ENCODE measurements at regions of chr2 and their contacts with region 1.

Region 1: DNA sequence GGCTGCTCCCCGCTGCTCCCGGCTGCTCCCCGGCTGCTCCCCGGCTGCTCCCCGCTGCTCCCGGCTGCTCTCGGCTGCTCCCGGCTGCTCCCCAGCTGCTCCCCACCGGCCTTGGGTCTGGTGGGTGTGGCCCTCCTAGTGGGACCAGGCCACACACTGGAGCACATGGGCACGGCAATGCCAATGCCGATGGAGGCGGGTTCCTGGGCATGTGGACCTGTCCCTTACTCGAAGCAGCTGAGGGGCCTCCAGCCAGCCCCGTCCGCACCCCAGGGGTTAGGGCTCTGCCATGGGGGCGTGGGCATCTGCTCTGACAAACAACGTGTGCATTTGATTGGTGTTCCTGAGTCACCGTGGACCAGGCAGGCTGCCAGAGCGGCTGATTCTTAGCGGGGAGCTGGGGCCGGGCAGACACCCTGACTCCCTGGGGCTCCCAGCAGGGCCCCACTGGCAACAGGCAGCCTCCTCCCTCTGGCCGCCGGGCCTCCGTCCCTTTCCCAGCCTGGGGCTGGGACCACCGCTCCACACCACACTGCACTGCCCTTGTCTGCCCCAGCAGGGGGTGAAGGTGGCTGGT is 1.9 kb upstream of the GAL3ST2 start:
- DNase-seq: no peak
- H3K4me3 ChIP-seq: no peak overlapping the region
- H3K27ac ChIP-seq: no peak overlapping the region
- H3K4me1 ChIP-seq: peaks cover 23% of the 10 kb centered on the region
- H3K27me3 ChIP-seq: no peaks in the 10 kb centered on the region
- CTCF ChIP-seq: no peak

Region 2: GRCh38 chr2:241798081-241798630 is 23.4 kb after region 1 on chr2:
- CTCF ChIA-PET with region 1: no interaction called
- dilution Hi-C with region 1: no loop called
- in situ Hi-C with region 1: no loop called
- intact Hi-C with region 1: no loop called
- DNase-seq: no peak
- H3K4me3 ChIP-seq: no peak overlapping the region
- H3K27ac ChIP-seq: no peak overlapping the region
- H3K4me1 ChIP-seq: peaks cover 2% of the 10 kb centered on the region
- H3K27me3 ChIP-seq: peaks cover 4% of the 10 kb centered on the region
- CTCF ChIP-seq: no peak

Region 3: DNA sequence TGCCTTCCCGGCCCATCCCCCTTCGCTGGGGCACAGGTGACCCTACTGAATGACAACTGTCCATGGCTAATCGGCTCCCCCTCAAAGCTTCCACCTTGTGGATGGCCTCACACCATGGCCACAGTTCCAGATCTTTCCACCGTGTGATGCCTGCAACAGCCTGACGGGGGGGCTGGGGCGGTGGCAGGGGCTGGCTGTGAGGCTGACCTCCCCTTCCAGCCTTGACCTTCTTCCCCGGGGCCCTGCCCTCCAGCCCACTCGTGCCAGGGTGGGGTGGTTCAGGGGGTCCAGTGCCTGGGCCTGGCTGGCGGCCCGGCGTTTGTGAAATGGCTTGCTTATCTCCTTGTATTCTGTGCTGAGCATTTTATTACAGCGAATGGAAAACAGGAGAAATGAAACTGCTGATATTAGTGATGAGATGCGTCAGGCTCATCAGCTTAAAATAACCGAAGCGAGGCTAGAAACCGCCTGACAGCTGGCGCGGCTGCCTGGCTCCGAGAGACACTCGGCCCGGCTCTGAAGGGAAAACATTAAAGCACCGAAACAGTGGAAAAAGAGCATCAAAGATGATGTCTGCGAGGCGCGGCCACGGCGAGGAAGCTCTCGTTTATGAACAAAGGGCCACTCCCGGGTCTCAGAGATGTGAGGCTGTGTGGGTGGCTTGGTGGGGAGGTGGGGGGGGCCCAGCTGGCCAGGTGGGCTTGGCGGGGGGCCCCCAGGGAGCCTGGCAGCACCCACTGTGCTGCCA is 84.9 kb after region 1 on chr2:
- CTCF ChIA-PET with region 1: no interaction called
- dilution Hi-C with region 1: loop called (anchors 5 kb)
- in situ Hi-C with region 1: no loop called
- intact Hi-C with region 1: no loop called
- DNase-seq: no peak
- H3K4me3 ChIP-seq: no peak overlapping the region
- H3K27ac ChIP-seq: no peak overlapping the region
- H3K4me1 ChIP-seq: no peaks in the 10 kb centered on the region
- H3K27me3 ChIP-seq: peaks cover 9% of the 10 kb centered on the region
- CTCF ChIP-seq: no peak

Measured in mammary epithelial cell (primary cell).